ENCODE measurements at regions of chr3 and their contacts with region 1.

Region 1: GRCh38 chr3:138329127-138329983 is at the start of gene NME9:
- DNase-seq: peak; percentile 89 to 94 (median 92)
- ATAC-seq: peak; percentile 94 to 98 (median 96)
- H3K4me3 ChIP-seq: peak within 1 kb of the TSS; percentile 47 to 72 (median 66)
- H3K27ac ChIP-seq: peak within 1 kb of the TSS in 9 of 12 donors; percentile 16 to 69 (median 53)
- H3K4me1 ChIP-seq: peaks cover 0 to 18% (median 9%) of the 10 kb centered on the region in 12 donors
- H3K27me3 ChIP-seq: no peaks in the 10 kb centered on the region
- CTCF ChIP-seq: peak; percentile 17 to 62 (median 42)
- POLR2A ChIP-seq: no peak
- total RNA-seq, gene NME9: not detected

Region 2: GRCh38 chr3:138197058-138197457 is 132.3 kb before region 1 on chr3:
- intact Hi-C with region 1: loop called in 1 of 10 experiments (anchors 10 kb)
- DNase-seq: peak in 2 of 5 donors; percentile 28 to 29
- ATAC-seq: peak; percentile 51 to 87 (median 70)
- H3K4me3 ChIP-seq: no peak overlapping the region
- H3K27ac ChIP-seq: no peak overlapping the region
- H3K4me1 ChIP-seq: peaks cover 0 to 29% (median 15%) of the 10 kb centered on the region in 12 donors
- H3K27me3 ChIP-seq: no peaks in the 10 kb centered on the region
- CTCF ChIP-seq: no peak
- POLR2A ChIP-seq: no peak

Measured in heart left ventricle (tissue), 16 donors.